ENCODE measurements at regions of chr10 and their contacts with region 1.

Region 1: GRCh38 chr10:95183271-95184230 is 10.5 kb upstream of the ACSM6 start:
- DNase-seq: peak; percentile 70
- H3K4me3 ChIP-seq: peak overlapping the region; percentile 58 to 66 (median 66)
- H3K27ac ChIP-seq: no peak overlapping the region
- H3K4me1 ChIP-seq: peaks cover 4% of the 10 kb centered on the region
- H3K27me3 ChIP-seq: no peaks in the 10 kb centered on the region
- CTCF ChIP-seq: peak; percentile 49 to 74

Region 2: GRCh38 chr10:94630017-94630688 is 553.4 kb before region 1 on chr10:
- CTCF ChIA-PET with region 1: no interaction called
- dilution Hi-C with region 1: no loop called
- in situ Hi-C with region 1: no loop called
- intact Hi-C with region 1: loop called (anchors 2 kb)
- DNase-seq: peak; percentile 8
- H3K4me3 ChIP-seq: no peak overlapping the region
- H3K27ac ChIP-seq: no peak overlapping the region
- H3K4me1 ChIP-seq: no peaks in the 10 kb centered on the region
- H3K27me3 ChIP-seq: no peaks in the 10 kb centered on the region
- CTCF ChIP-seq: peak; percentile 53 to 63

Region 3: GRCh38 chr10:95588025-95588424 is 404.5 kb after region 1 on chr10:
- CTCF ChIA-PET with region 1: no interaction called
- dilution Hi-C with region 1: no loop called
- in situ Hi-C with region 1: loop called in 1 of 2 experiments (anchors 25 kb)
- intact Hi-C with region 1: no loop called
- DNase-seq: peak; percentile 36
- H3K4me3 ChIP-seq: no peak overlapping the region
- H3K27ac ChIP-seq: no peak overlapping the region
- H3K4me1 ChIP-seq: no peaks in the 10 kb centered on the region
- H3K27me3 ChIP-seq: no peaks in the 10 kb centered on the region
- CTCF ChIP-seq: no peak